Lower leg skin (tissue), 4 donors: ENCODE measurements at regions of chr21 and their contacts with region 1.

Region 1: GRCh38 chr21:38897532-38898422 is 92.0 kb downstream of the ETS2 start:
- DNase-seq: no peak
- H3K4me3 ChIP-seq: no peak overlapping the region
- CTCF ChIP-seq: no peak
- POLR2A ChIP-seq: no peak

Region 2: GRCh38 chr21:38839328-38840286 is 58.2 kb before region 1 on chr21:
- intact Hi-C with region 1: loop called (anchors 10 kb)
- DNase-seq: no peak
- H3K4me3 ChIP-seq: no peak overlapping the region
- CTCF ChIP-seq: no peak
- POLR2A ChIP-seq: no peak

Region 3: GRCh38 chr21:38937844-38938742 is 40.3 kb after region 1 on chr21:
- intact Hi-C with region 1: no loop called
- DNase-seq: no peak
- H3K4me3 ChIP-seq: no peak overlapping the region
- CTCF ChIP-seq: no peak
- POLR2A ChIP-seq: no peak